Stomach (tissue), 19 donors: ENCODE measurements at regions of chr7 and their contacts with region 1.

Region 1: GRCh38 chr7:151310578-151310977 is 31.0 kb upstream of the NUB1 start:
- DNase-seq: peak in 1 of 2 donors; percentile 36
- H3K4me3 ChIP-seq: no peak overlapping the region
- H3K27ac ChIP-seq: no peak overlapping the region
- H3K4me1 ChIP-seq: peaks cover 0 to 17% (median 11%) of the 10 kb centered on the region in 4 donors
- H3K27me3 ChIP-seq: peaks cover 0 to 36% (median 0%) of the 10 kb centered on the region in 3 donors
- CTCF ChIP-seq: peak in 2 of 7 experiments; percentile 30 to 38
- EP300 ChIP-seq: no peak
- POLR2A ChIP-seq: no peak

Region 2: GRCh38 chr7:151244196-151244840 is 66.3 kb before region 1 on chr7:
- intact Hi-C with region 1: loop called (anchors 10 kb)
- DNase-seq: peak; percentile 55 to 84
- H3K4me3 ChIP-seq: peak overlapping the region in 1 of 4 donors; percentile 46
- H3K27ac ChIP-seq: peak overlapping the region in 2 of 5 donors; percentile 8 to 41
- H3K4me1 ChIP-seq: peaks cover 46 to 74% (median 64%) of the 10 kb centered on the region in 4 donors
- H3K27me3 ChIP-seq: peaks cover 0 to 38% (median 21%) of the 10 kb centered on the region in 3 donors
- CTCF ChIP-seq: peak in 5 of 7 experiments; percentile 43 to 93 (median 87)
- EP300 ChIP-seq: no peak
- POLR2A ChIP-seq: no peak

Region 3: GRCh38 chr7:151349507-151349853 is 38.9 kb after region 1 on chr7:
- intact Hi-C with region 1: loop called (anchors 5 kb)
- DNase-seq: no peak
- H3K4me3 ChIP-seq: peak overlapping the region; percentile 36 to 44 (median 39)
- H3K27ac ChIP-seq: peak overlapping the region; percentile 78 to 93 (median 83)
- H3K4me1 ChIP-seq: peaks cover 5 to 67% (median 23%) of the 10 kb centered on the region in 4 donors
- H3K27me3 ChIP-seq: no peaks in the 10 kb centered on the region
- CTCF ChIP-seq: no peak
- EP300 ChIP-seq: no peak
- POLR2A ChIP-seq: no peak

Region 4: DNA sequence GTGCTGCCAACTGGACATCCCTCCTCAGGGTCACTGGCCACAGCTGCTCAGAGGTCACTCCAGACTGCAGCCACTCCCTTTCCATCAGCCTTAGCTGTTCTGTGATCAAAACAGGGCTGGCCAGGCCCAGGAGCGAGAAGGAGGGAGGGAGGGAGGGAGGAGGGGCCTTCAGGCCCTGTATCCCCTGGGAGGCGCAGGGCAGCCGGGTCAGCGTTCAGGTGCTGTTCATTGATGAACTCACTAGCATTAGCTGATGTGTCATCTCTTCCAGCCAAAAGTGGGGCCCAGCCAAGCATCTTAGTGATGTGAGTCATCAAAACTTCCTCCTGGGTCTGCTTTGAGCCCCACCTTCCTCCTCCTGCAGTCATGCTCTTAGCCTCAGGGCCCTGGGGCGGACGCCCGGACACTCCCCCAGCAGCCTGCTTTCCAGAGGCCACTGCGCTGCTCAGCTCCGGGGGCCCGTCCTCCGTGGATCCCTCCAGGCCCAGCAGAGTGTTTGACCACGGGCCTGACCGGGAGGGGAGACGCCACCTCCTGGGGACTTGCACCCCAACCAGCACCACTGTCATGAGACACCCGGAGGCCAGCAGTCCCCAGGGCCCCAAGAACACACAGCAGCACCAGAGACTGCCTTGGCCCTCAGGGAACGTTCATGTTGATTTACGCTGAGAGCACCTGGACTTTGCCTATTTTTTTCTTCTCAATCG is 417.2 kb after region 1 on chr7:
- intact Hi-C with region 1: no loop called
- DNase-seq: peak; percentile 65 to 71
- H3K4me3 ChIP-seq: no peak overlapping the region
- H3K27ac ChIP-seq: peak overlapping the region; percentile 4 to 71 (median 33)
- H3K4me1 ChIP-seq: peaks cover 13 to 27% (median 19%) of the 10 kb centered on the region in 4 donors
- H3K27me3 ChIP-seq: no peaks in the 10 kb centered on the region
- CTCF ChIP-seq: no peak
- EP300 ChIP-seq: no peak
- POLR2A ChIP-seq: no peak